ENCODE measurements at regions of chr7 and their contacts with region 1.

Region 1: GRCh38 chr7:120898715-120899499 is 41.0 kb upstream of the TSPAN12 start:
- DNase-seq: peak; percentile 56
- ATAC-seq: peak; percentile 62
- H3K4me3 ChIP-seq: no peak overlapping the region
- H3K27ac ChIP-seq: no peak overlapping the region
- H3K4me1 ChIP-seq: no peaks in the 10 kb centered on the region
- H3K27me3 ChIP-seq: no peaks in the 10 kb centered on the region
- CTCF ChIP-seq: no peak
- EP300 ChIP-seq: no peak; a peak in 1 of 4 replicates
- POLR2A ChIP-seq: no peak
- RAD21 ChIP-seq: no peak

Region 2: DNA sequence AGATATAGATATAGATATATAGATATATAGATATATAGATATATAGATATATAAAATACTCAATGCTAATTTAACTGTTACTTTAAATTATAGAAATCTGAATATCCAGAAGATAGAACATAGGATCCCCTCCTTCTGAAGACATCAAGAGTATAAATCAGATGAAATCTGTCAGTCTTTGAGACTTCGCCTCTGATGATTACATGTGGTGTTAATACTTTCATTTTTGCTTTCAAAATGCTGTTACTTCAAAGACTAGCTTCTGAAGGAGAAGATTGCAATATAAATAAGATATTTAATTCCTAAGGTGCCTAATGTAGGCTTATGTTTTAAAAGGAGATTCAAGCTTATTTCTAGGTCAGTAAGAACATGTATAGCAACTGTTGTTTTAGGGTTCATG is 221.4 kb before region 1 on chr7:
- CTCF ChIA-PET with region 1: no interaction called
- POLR2A ChIA-PET with region 1: no interaction called
- in situ Hi-C with region 1: no loop called
- intact Hi-C with region 1: no loop called
- DNase-seq: no peak
- ATAC-seq: no peak
- H3K4me3 ChIP-seq: no peak overlapping the region
- H3K27ac ChIP-seq: no peak overlapping the region
- H3K4me1 ChIP-seq: no peaks in the 10 kb centered on the region
- H3K27me3 ChIP-seq: no peaks in the 10 kb centered on the region
- CTCF ChIP-seq: no peak
- EP300 ChIP-seq: no peak
- POLR2A ChIP-seq: no peak
- RAD21 ChIP-seq: no peak

Region 3: DNA sequence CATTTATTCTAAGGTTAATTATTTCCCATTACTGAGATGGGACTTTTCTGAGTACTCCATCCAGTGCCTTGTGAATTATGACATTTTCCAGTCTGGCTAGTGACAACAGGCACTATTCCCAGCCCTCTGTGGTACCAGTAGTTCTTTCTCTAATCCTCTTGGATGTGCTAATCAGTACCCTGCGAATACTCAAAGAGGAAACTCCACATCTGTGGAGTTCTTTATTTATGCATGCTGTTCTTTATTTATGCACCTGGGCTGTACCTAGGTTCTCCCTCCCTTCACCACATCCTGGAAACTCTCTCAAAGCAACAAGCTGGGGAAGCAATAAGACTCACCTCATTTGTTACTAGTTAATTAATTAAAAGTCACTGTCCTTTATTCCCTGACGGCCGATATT is 124.4 kb before region 1 on chr7:
- CTCF ChIA-PET with region 1: no interaction called
- POLR2A ChIA-PET with region 1: no interaction called
- in situ Hi-C with region 1: no loop called
- intact Hi-C with region 1: no loop called
- DNase-seq: no peak
- ATAC-seq: no peak
- H3K4me3 ChIP-seq: no peak overlapping the region
- H3K27ac ChIP-seq: no peak overlapping the region
- H3K4me1 ChIP-seq: no peaks in the 10 kb centered on the region
- H3K27me3 ChIP-seq: no peaks in the 10 kb centered on the region
- CTCF ChIP-seq: no peak
- EP300 ChIP-seq: no peak
- POLR2A ChIP-seq: no peak
- RAD21 ChIP-seq: no peak

Region 4: GRCh38 chr7:120857588-120858573 is 41.0 kb before region 1 on chr7 and contains the start of gene TSPAN12:
- CTCF ChIA-PET with region 1: no interaction called
- POLR2A ChIA-PET with region 1: no interaction called
- in situ Hi-C with region 1: no loop called
- intact Hi-C with region 1: loop called (anchors 1 kb)
- DNase-seq: peak; percentile 39
- ATAC-seq: peak; percentile 98
- H3K4me3 ChIP-seq: peak within 1 kb of the TSS; percentile 61 to 75 (median 70)
- H3K27ac ChIP-seq: no peak within 1 kb of the TSS
- H3K4me1 ChIP-seq: peaks cover 6% of the 10 kb centered on the region
- H3K27me3 ChIP-seq: no peaks in the 10 kb centered on the region; a peak in 1 of 5 replicates
- CTCF ChIP-seq: peak; percentile 62
- EP300 ChIP-seq: no peak
- POLR2A ChIP-seq: no peak
- RAD21 ChIP-seq: peak; percentile 55
- total RNA-seq, gene TSPAN12: 0.70 and 0.95 TPM in 2 replicates

Region 5: GRCh38 chr7:120950539-120951308 is 51.8 kb after region 1 on chr7 and contains the start of gene ING3:
- CTCF ChIA-PET with region 1: no interaction called
- POLR2A ChIA-PET with region 1: no interaction called
- in situ Hi-C with region 1: no loop called
- intact Hi-C with region 1: loop called (anchors 2 kb)
- DNase-seq: peak; percentile 95
- ATAC-seq: peak; percentile 97
- H3K4me3 ChIP-seq: peak within 1 kb of the TSS; percentile 69 to 91 (median 78)
- H3K27ac ChIP-seq: peak within 1 kb of the TSS; percentile 98
- H3K4me1 ChIP-seq: peaks cover 19% of the 10 kb centered on the region
- H3K27me3 ChIP-seq: no peaks in the 10 kb centered on the region
- CTCF ChIP-seq: no peak
- EP300 ChIP-seq: no peak
- POLR2A ChIP-seq: peak; percentile 55 to 75
- RAD21 ChIP-seq: no peak
- total RNA-seq, gene ING3: 12.8 and 17.3 TPM in 2 replicates

Region 6: GRCh38 chr7:121081327-121081936 is 182.5 kb after region 1 on chr7:
- CTCF ChIA-PET with region 1: no interaction called
- POLR2A ChIA-PET with region 1: no interaction called
- in situ Hi-C with region 1: no loop called
- intact Hi-C with region 1: loop called (anchors 1 kb)
- DNase-seq: peak; percentile 36
- ATAC-seq: peak; percentile 52
- H3K4me3 ChIP-seq: no peak overlapping the region
- H3K27ac ChIP-seq: no peak overlapping the region
- H3K4me1 ChIP-seq: peaks cover 11% of the 10 kb centered on the region
- H3K27me3 ChIP-seq: no peaks in the 10 kb centered on the region
- CTCF ChIP-seq: peak; percentile 68
- EP300 ChIP-seq: no peak
- POLR2A ChIP-seq: no peak
- RAD21 ChIP-seq: 0 out of 2 replicates have a peak, but pooled peaks have one; percentile 19